Left cardiac atrium (tissue), 4 donors: ENCODE measurements at regions of chr13 and their contacts with region 1.

Region 1: DNA sequence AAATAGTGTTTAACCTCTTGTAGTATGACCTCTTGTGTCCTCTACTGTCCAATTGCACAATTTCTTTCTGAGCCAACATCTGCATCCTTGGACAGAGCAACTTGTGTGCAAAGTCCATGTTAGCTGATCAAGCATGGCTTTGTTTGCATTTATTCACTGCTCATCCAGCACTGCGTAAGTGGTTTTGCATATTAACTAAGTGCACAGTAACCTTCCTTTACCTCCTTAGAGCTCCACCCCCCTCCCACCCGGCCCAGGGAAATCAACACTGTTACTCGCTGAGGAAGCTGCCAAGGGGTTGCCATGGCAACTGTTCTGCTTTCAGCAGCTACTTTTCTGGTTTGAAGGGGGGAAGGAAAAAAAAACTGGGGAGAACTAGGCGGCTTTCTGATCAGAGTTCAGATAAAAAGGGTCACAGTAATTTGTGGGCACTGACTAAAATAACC is 153.5 kb upstream of the KLF12 start:
- DNase-seq: peak; percentile 87
- ATAC-seq: peak; percentile 56 to 68

Region 2: DNA sequence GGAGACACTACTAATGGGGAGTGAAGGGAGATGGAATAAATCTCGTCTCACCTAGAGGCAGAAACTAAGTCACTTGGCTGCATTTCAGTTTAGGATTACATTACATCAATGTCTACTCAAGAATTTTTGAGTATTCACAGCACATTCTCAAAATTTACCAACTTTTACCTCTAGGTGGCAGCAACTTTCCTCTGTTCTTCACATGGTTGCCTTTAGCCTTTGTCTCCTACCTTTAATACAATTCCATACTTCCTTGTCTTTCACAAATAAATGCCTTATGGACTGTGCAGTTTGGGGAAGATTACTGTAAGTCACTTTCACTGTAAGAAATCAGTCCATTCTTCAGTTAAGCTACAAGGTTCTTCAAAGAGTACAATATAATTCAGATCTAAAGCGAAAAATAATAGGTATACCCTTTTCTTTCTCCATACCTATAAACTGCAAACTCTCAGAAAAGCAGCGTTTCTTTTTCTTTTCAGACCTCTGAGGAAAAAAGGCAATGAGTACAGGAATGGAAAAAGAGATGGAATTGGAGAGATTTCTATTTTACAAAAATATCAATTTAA is 532.9 kb before region 1 on chr13:
- intact Hi-C with region 1: loop called in 1 of 2 experiments (anchors 2 kb)
- DNase-seq: no peak
- ATAC-seq: peak; percentile 44 to 61

Region 3: DNA sequence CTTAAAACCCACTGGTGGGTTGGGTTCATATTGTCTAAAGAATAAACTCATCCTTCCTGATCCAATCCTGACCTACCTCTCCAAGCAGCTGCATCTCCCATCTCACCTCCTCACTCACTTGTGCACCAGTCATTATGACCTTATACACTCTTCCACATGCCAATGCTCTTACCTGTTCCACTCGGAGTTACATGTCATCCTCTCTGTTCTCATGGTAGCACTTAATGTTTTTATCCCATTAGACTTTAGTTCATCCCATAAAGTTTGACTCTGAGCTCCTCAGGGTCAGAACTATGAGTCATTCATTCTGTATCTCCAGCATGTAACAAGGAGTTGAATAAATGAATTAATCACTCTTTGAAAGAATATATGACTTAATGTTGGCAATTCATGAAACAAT is 483.8 kb before region 1 on chr13:
- intact Hi-C with region 1: no loop called
- DNase-seq: no peak
- ATAC-seq: peak in 1 of 2 donors; percentile 39

Region 4: GRCh38 chr13:73835138-73835721 is 452.5 kb before region 1 on chr13:
- intact Hi-C with region 1: loop called in 1 of 2 experiments (anchors 5 kb)
- DNase-seq: no peak
- ATAC-seq: no peak

Region 5: DNA sequence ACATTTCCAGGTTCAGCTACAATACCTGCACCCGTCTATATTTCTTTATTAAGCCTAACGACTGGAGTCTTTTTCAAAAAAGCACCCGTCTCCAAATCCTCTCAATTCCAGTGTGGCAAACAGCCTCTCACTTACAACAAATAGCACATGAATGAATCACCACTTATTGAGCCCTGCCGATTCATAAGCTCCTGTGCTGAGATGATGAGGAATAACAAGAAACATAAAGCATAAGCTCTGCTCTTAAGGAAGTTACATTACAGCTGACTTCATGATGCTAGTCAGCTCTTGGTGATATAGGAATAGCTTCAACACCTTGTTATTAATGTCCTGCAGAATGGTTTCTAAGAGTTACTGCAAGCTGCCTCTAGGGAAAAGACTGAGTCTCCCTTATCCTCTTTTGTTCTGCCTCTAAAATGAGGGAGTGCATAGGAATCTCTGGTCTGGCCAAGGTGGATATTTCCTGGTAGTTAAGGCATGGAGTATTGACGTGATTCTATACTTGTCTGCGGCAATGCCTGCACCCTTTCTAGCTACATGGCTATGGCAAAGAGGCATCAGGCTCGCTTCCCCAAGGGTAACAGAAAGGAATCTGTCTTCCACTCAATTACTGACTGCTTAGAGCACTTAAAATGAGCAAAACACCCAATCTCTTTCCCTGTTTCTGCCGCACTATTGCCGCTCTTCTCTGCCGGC is 349.2 kb before region 1 on chr13:
- intact Hi-C with region 1: loop called in 1 of 2 experiments (anchors 5 kb)
- DNase-seq: no peak
- ATAC-seq: no peak

Region 6: DNA sequence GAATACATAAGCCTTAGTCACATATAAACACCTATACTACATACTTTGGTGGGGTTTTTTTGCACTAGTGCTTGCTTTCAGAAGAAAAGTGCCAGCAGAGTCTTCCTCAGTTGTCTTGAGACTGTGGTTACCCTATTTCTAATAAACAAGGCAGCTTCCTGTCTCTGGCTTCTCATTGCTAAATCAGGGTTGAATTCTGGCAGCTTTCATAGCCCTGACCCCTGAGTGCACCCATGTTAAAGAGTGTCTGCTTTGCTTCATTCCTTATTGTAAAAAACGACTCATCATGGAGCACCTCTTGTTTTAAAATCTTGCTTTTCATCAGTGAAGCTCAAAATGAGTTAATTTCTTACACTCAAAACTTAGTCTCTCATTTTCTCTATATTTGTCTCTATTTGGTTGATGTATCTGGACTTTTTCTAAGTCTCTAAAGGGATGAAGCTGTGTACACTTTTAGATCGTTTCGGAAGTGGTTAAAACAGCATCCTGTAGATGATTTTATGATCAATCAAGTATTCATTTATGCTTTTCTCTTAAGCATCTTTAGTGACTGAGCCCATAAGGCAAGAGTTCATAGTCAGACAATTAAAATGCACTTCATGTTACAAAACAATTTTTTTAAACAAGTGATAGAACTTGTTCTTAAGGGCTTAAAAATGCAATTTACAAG is 225.7 kb before region 1 on chr13:
- intact Hi-C with region 1: no loop called
- DNase-seq: no peak
- ATAC-seq: peak; percentile 58 to 64

Region 7: DNA sequence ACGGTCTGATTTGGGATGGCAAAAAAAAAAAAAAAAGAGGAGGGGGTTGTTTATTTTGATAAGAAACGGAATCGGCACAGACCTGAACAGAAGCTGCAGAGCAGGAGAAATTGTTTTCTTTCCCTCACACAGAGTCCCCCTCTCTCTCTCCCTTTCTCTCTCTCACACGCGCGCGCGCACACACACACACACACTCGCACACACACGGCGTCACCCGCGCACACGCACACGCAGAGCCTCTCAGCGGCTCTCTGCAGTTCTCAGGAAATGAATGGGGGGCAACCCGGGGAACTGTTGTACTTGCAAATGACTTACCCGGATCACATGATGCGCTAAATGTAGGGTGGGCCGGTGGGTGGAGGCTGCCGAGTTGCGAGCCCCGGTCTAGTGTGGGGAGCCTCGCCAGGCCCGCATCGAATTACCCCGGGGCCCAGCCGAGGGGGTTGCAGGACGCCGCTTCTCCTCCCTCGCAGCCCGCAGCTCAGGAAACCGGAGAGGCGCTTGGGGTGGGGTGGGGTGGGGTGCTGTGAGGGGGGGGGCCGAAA is 154.0 kb before region 1 on chr13:
- intact Hi-C with region 1: loop called in 1 of 2 experiments (anchors 5 kb)
- DNase-seq: peak; percentile 88
- ATAC-seq: peak; percentile 63 to 74

Region 8: GRCh38 chr13:74530011-74530410 is 242.3 kb after region 1 on chr13:
- intact Hi-C with region 1: no loop called
- DNase-seq: no peak
- ATAC-seq: no peak